CD8-positive, alpha-beta T cell (primary cell): ENCODE measurements at regions of chr12 and their contacts with region 1.

Region 1: DNA sequence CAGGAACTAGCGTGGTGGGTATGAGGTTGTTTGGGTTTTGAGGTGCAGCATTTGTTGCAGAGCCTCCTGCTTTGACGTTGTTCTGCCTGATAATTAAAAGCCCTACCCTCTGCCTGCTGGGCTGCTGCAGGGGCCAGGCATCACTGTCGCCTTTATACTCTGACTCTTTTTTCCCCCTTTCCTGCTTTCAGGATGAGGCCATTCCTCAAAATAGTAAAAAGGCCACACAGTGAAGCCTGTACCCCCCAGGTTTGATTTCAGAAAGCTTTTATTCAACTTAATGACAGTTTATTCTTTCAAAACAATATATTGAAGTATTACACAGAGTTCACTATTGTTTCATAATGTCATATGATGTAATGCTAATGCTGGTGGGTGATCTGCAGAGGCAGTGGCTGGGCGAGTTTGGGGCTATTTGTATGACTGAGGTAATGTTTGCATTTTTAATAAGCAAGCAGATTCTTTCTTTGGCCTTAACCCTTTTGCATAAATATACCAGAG is 9.1 kb downstream of the BORCS5 start:
- DNase-seq: peak in 1 of 9 experiments; percentile 47
- ATAC-seq: peak; percentile 40
- H3K4me3 ChIP-seq: no peak overlapping the region
- H3K4me3 Mint-ChIP-seq: no peak overlapping the region
- H3K27ac ChIP-seq: peak overlapping the region in 1 of 2 experiments; percentile 40
- H3K27ac Mint-ChIP-seq: peak overlapping the region; percentile 30
- H3K4me1 ChIP-seq: peaks cover 12% of the 10 kb centered on the region
- H3K4me1 Mint-ChIP-seq: peaks cover 47% of the 10 kb centered on the region
- H3K27me3 ChIP-seq: no peaks in the 10 kb centered on the region
- H3K27me3 Mint-ChIP-seq: no peaks in the 10 kb centered on the region
- CTCF ChIP-seq: no peak

Region 2: GRCh38 chr12:10994307-10994706 is 1371.7 kb before region 1 on chr12:
- CTCF ChIA-PET with region 1: no interaction called
- POLR2A ChIA-PET with region 1: no interaction called
- intact Hi-C with region 1: loop called in 1 of 2 experiments (anchors 10 kb)
- DNase-seq: no peak
- ATAC-seq: no peak
- H3K4me3 ChIP-seq: no peak overlapping the region
- H3K4me3 Mint-ChIP-seq: no peak overlapping the region
- H3K27ac ChIP-seq: no peak overlapping the region
- H3K27ac Mint-ChIP-seq: no peak overlapping the region
- H3K4me1 ChIP-seq: no peaks in the 10 kb centered on the region
- H3K4me1 Mint-ChIP-seq: no peaks in the 10 kb centered on the region
- H3K27me3 ChIP-seq: no peaks in the 10 kb centered on the region
- H3K27me3 Mint-ChIP-seq: peaks cover 3% of the 10 kb centered on the region
- CTCF ChIP-seq: no peak